Activated T-helper 1 cell treated with anti-CD3 and anti-CD28 coated beads, Interleukin-12 subunit alpha, Interleukin-12 subunit beta, Interleukin-2, Interleukin-4 antibody, amounts not matched to agents 30 ng/mL and 10 ng/mL and 1 ng/mL, durations not matched to agents 14 hours and 24 hours and 36 hours (primary cell): ENCODE measurements at regions of chr12 and their contacts with region 1.

Region 1: DNA sequence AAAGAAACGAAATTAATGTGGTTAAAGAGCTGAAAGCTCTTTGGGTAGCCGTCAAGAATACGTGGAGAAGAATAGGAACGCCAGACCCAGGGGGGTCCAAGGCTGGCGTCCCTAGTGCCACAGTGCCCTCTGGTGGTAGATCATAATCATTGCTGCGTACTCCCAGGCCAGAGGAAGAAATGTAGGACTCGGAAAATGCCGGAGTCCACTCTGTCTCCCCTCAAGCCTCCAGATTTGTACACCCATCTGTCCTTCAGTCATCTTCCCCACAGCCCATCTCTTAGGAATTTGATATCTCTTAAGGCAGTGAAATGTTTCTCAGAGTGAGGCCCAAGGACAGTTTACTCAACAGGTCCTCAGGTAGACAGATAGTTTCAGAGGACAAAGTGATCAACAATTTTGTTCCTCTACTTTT is 25.4 kb upstream of the PLEKHG6 start:
- DNase-seq: peak; percentile 42
- H3K4me3 Mint-ChIP-seq: no peak overlapping the region
- H3K27ac Mint-ChIP-seq: no peak overlapping the region
- H3K4me1 Mint-ChIP-seq: no peaks in the 10 kb centered on the region
- H3K27me3 Mint-ChIP-seq: peaks cover 11% of the 10 kb centered on the region

Region 2: GRCh38 chr12:5965950-5966383 is 319.1 kb before region 1 on chr12:
- intact Hi-C with region 1: loop called (anchors 1 kb)
- DNase-seq: peak; percentile 11
- H3K4me3 Mint-ChIP-seq: no peak overlapping the region
- H3K27ac Mint-ChIP-seq: no peak overlapping the region
- H3K4me1 Mint-ChIP-seq: no peaks in the 10 kb centered on the region
- H3K27me3 Mint-ChIP-seq: no peaks in the 10 kb centered on the region

Region 3: GRCh38 chr12:5988659-5989116 is 296.4 kb before region 1 on chr12:
- intact Hi-C with region 1: loop called (anchors 1 kb)
- DNase-seq: peak; percentile 55
- H3K4me3 Mint-ChIP-seq: no peak overlapping the region
- H3K27ac Mint-ChIP-seq: no peak overlapping the region
- H3K4me1 Mint-ChIP-seq: peaks cover 4% of the 10 kb centered on the region
- H3K27me3 Mint-ChIP-seq: peaks cover 6% of the 10 kb centered on the region

Region 4: GRCh38 chr12:6039894-6040568 is 245.0 kb before region 1 on chr12:
- intact Hi-C with region 1: loop called (anchors 1 kb)
- DNase-seq: peak; percentile 26
- H3K4me3 Mint-ChIP-seq: no peak overlapping the region
- H3K27ac Mint-ChIP-seq: no peak overlapping the region
- H3K4me1 Mint-ChIP-seq: peaks cover 7% of the 10 kb centered on the region
- H3K27me3 Mint-ChIP-seq: peaks cover 2% of the 10 kb centered on the region

Region 5: DNA sequence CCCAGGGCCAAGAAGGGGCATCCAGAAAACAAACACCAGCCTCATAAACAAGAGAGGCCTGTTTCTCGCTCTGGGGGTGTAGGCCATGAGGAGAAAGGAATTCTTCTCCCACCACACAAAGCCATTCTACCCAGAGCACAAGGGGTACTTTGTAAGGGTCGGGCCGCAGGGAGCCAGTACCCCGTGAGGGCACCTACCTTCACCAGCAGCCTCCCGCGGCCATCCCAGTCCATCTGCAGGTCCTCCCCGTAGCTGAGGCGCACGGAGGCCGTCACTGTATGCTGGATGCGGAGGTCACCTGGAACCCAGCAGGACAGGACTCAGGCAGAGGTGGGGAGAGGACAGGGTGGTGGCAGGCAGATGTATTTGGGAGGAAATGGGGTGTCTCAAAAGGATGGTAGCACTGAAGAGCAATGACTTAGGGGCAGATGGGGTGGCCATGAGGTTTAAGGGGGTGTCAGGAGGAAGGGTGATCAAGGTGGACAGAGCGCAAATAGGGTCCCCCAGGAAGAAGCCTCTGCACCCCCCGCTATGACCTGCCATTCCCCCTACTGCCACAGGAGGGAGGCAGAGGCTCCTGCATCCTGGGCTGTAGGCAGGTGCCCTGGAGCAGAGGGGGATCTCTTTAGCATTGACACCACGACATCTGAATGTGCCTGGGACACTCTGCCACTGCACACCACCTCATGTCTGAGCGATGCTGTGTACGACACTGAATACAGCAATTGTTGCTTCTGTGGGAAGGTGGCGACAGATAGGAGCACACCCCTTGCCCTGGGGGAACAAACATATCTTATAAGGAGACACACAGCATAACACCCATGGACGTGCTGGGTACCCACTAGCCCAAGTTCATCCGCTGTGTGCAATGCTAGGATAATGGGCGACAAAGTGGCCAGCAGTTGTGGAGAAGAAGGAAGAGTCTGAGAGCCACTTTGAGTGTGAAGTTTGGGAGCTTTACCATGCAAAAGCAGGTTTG is 222.0 kb before region 1 on chr12:
- intact Hi-C with region 1: loop called (anchors 1 kb)
- DNase-seq: peak; percentile 17
- H3K4me3 Mint-ChIP-seq: no peak overlapping the region
- H3K27ac Mint-ChIP-seq: no peak overlapping the region
- H3K4me1 Mint-ChIP-seq: peaks cover 4% of the 10 kb centered on the region
- H3K27me3 Mint-ChIP-seq: peaks cover 2% of the 10 kb centered on the region

Region 6: DNA sequence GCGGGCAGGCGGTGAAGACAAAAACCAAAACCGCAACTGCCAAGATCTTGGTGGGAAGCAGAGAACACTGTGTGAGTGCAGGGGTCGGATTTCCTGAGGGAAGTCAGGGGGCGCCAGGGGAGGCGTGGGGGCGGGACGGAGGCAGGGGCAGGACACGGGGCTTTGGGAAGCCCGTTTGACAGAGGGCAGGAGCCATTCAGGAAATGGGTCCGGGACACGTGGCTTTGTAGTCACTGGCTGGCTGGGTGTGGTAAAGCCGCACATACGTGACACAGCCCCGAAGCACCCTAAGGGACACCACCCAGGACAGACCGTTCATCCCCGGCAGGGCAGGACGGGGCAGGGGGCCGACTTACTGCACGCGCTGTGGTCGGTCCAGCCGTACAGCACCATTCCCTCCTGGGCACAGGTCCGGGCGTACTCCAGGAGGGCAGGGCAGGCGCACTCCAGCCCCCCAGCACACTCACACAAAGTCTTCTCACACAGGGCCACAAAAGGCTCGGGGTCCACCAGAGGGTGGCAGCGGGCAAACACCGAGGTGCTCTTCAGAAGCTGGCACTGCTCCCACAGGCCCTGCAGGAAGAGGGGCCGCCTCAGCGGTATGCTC is 210.0 kb before region 1 on chr12:
- intact Hi-C with region 1: no loop called
- DNase-seq: peak; percentile 16
- H3K4me3 Mint-ChIP-seq: peak overlapping the region; percentile 79
- H3K27ac Mint-ChIP-seq: peak overlapping the region; percentile 49
- H3K4me1 Mint-ChIP-seq: peaks cover 31% of the 10 kb centered on the region
- H3K27me3 Mint-ChIP-seq: peaks cover 26% of the 10 kb centered on the region

Region 7: GRCh38 chr12:6262623-6263022 is 22.4 kb before region 1 on chr12:
- intact Hi-C with region 1: no loop called
- DNase-seq: no peak
- H3K4me3 Mint-ChIP-seq: no peak overlapping the region
- H3K27ac Mint-ChIP-seq: no peak overlapping the region
- H3K4me1 Mint-ChIP-seq: peaks cover 27% of the 10 kb centered on the region
- H3K27me3 Mint-ChIP-seq: peaks cover 3% of the 10 kb centered on the region